Calu3 (cell line): ENCODE measurements at regions of chr12 and their contacts with region 1.

Region 1: DNA sequence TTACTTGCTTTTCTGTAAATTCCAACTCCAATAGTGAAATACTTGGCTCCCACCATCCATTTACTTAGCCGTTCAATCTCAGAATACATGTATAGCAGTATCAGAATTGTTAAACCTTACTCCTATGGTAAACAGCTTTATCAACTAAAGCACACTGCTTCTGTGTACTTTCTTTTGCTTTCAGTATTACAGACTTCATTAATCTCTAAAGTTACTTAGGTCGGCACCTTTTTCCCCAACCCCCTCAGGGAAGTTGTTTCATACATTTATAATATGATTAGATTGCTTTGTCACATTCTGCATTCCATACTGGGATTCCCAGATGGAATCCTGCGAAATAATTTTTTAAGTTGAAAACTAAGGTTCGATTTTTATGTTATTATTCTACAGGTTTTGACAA is 12.5 kb downstream of the AVPR1A start:
- DNase-seq: no peak
- H3K4me3 Mint-ChIP-seq: no peak overlapping the region
- H3K27ac Mint-ChIP-seq: no peak overlapping the region
- H3K4me1 Mint-ChIP-seq: no peaks in the 10 kb centered on the region
- H3K27me3 Mint-ChIP-seq: peaks cover 17% of the 10 kb centered on the region
- CTCF ChIP-seq: no peak

Region 2: GRCh38 chr12:63103494-63104131 is 34.9 kb before region 1 on chr12:
- CTCF ChIA-PET with region 1: no interaction called
- intact Hi-C with region 1: no loop called
- DNase-seq: peak; percentile 34
- H3K4me3 Mint-ChIP-seq: no peak overlapping the region
- H3K27ac Mint-ChIP-seq: no peak overlapping the region
- H3K4me1 Mint-ChIP-seq: peaks cover 7% of the 10 kb centered on the region
- H3K27me3 Mint-ChIP-seq: no peaks in the 10 kb centered on the region
- CTCF ChIP-seq: peak; percentile 79

Region 3: DNA sequence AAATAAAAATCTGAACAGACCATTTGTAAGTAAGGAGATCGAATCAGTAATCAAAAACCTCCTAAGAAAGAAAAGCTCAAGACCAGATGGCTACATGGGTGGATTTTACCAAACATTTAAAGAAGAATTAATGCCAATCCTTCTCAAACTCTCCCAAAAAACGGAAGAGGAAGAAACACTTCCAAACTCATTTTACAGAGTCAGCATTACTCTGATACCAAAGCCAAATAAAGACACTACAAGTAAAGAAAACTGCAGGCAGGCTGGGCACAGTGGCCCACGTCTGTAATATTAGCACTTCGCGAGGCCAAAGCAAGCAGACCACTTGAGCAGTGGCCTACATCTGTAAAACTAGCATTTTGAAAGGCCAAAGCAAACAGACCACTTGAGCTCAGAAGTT is 370.1 kb after region 1 on chr12:
- CTCF ChIA-PET with region 1: interaction called, 10 read pairs
- intact Hi-C with region 1: no loop called
- DNase-seq: no peak
- H3K4me3 Mint-ChIP-seq: no peak overlapping the region
- H3K27ac Mint-ChIP-seq: no peak overlapping the region
- H3K4me1 Mint-ChIP-seq: no peaks in the 10 kb centered on the region
- H3K27me3 Mint-ChIP-seq: no peaks in the 10 kb centered on the region
- CTCF ChIP-seq: no peak